Activated T-helper 2 cell treated with anti-CD3 and anti-CD28 coated beads, Interferon-gamma antibody, Interleukin-2, Interleukin-4, amounts not matched to agents 10 μg/mL and 5 μg/mL and 100 μg/mL, durations not matched to agents 14 hours and 24 hours and 36 hours (primary cell): ENCODE measurements at regions of chr15 and their contacts with region 1.

Region 1: DNA sequence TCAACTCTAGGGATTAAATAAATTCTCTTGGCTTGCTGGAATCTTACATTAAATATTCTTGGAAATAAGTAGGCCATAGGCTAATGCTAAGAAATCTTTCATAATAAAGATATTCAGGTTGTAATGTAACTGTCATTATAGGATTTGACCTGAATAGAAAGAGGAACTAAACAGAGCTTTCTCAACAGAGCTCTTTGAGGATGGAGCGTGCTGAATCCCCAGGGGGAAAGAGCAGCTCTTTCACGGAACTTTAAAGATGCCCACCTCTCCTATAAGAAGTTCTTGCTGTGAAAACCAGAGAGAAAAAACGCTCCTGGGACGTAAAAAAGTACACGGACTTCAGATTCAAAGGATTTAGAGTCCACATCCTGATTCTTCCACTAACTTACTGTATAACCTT is 77.9 kb downstream of the NTRK3 start:
- DNase-seq: no peak
- H3K4me3 Mint-ChIP-seq: no peak overlapping the region
- H3K27ac Mint-ChIP-seq: no peak overlapping the region
- H3K4me1 Mint-ChIP-seq: peaks cover 4% of the 10 kb centered on the region
- H3K27me3 Mint-ChIP-seq: no peaks in the 10 kb centered on the region

Region 2: DNA sequence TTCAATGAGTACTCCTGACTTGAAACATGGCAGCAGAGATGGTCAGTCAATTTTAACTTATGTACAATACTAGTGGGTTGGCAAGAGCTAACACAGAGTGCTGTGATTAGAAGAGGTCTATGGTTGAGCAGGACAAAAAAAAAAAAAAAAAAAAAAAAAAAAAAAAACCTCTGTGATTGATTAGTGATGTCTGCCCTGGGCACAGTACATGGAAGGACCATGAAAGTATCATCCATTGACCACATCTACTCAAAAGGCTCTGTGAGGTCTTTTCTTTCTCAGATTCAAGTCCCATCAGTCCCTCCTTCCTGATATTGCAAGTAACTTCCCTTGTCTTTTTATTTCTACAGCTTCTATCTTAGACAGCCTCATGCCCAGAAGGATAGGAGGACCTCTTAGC is 18.3 kb after region 1 on chr15:
- intact Hi-C with region 1: loop called (anchors 1 kb)
- DNase-seq: no peak
- H3K4me3 Mint-ChIP-seq: no peak overlapping the region
- H3K27ac Mint-ChIP-seq: no peak overlapping the region
- H3K4me1 Mint-ChIP-seq: no peaks in the 10 kb centered on the region
- H3K27me3 Mint-ChIP-seq: no peaks in the 10 kb centered on the region